ENCODE measurements at regions of chr12 and their contacts with region 1.

Region 1: DNA sequence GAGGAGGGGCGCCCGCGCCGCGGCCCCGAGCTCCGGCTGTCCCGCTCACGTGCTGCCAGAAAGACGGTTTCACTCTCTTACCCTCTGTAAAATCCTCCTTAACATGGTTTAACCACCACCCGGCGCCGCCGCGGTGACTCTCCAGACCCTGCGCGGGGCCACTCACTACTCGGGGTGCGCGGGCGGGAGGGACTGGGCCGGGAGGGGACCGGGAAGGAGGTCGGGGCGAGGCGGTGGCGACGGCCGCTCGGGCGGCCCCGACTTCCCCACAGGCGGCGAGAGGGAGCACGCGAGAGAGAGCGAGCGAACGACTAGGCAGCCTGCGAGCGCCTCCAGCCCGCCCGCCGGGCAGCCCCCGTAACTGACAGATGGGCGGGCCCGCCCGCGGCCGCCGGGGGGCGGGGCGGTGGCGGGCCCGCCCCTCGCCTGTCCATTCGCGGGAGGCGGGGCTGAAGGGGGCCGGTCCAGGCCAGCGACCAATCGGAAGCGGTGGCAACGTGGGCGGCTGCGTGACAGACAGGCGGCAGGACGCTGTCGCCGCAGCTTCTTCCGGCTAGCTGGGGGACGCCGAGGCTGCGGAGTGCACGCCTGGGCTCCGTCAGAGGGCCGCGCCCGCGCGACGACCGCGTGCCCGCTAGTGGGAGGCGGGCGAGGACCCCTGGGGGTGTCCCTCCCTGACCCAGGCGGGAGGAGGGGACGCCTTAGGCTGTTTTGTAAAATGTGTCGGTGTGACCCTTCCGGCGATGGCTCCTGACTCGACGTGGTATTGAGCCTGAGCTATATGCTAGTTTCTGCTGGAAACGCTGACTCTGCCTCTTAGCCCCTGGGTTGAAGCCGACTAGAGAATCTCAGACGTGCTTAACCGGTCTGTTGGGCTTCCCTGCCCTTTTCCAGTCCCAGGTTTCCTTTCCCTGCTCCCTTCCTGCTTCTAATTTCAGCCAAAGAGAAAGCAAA is at the start of gene EEA1:
- DNase-seq: peak; percentile 98
- H3K4me3 Mint-ChIP-seq: peak within 1 kb of the TSS; percentile 89
- H3K27ac Mint-ChIP-seq: peak within 1 kb of the TSS; percentile 96
- H3K4me1 Mint-ChIP-seq: peaks cover 27% of the 10 kb centered on the region
- H3K27me3 Mint-ChIP-seq: peaks cover 6% of the 10 kb centered on the region
- total RNA-seq, gene EEA1: 22.2 and 23.4 TPM in 2 replicates

Region 2: DNA sequence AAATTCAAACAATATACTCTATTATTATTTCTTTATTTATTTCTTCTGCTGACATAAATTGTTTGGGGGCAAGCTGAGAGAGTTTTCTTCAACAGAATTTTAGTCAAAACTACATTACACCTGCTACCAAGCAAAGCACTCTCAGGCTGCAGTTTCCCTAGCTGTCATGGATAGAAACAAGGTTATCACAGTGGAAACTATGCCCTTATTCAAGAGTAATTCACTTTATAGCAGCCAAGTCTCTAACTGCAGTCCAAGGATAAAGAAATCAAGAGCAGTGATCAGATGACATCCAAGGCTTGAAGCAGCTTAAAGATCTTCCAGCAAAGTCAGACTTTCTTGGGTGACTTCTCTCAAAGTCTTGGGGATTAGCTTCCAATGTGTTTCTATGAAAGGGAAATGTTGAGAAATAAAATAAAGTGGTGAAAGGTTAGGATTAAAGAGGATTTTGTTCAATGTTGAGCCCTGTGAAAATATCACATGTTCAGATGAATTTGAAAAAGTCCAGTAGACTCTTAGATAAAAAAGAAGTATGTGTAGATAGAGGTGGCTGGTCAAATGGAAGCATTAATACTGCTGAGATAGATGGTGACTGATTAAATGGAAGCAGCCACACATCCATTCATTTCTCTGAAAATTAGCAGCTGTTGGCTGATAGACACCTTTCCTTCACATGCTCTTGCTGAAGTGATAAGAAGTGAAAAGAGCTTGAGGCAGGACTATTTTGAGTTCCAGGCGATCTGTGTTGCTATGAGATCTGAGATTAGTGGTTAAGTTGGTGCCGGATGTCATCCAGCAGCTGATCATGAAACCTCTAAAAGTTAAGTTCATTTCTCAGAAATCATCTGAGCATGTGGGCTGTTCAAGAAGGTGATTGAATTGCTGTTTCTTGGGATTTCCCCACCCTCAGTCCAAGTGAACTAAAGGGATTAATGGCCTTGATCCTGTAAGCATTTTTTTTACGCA is 525.7 kb before region 1 on chr12:
- intact Hi-C with region 1: loop called (anchors 5 kb)
- DNase-seq: peak; percentile 93
- H3K4me3 Mint-ChIP-seq: peak overlapping the region; percentile 69
- H3K27ac Mint-ChIP-seq: peak overlapping the region; percentile 94
- H3K4me1 Mint-ChIP-seq: peaks cover 78% of the 10 kb centered on the region
- H3K27me3 Mint-ChIP-seq: no peaks in the 10 kb centered on the region

Region 3: DNA sequence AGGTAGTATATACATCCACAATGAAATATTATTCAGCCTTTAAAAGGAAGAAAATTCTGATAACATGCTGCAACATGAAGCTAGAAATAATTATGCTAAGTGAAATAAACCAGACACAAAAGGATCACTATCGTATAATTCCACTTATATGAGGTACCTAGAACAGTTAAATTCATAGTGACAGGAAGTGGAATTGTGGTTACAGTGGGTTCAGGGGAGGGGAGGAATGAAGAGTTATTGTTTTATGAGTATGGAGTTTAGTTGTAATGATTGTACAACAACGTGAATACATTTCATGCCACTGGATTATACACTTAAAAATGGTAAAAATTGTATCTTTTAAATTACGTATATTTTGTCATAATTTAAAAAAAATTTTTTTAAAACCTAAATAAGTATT is 21.1 kb before region 1 on chr12:
- intact Hi-C with region 1: loop called (anchors 1 kb)
- DNase-seq: peak; percentile 76
- H3K4me3 Mint-ChIP-seq: peak overlapping the region; percentile 55
- H3K27ac Mint-ChIP-seq: no peak overlapping the region
- H3K4me1 Mint-ChIP-seq: peaks cover 35% of the 10 kb centered on the region
- H3K27me3 Mint-ChIP-seq: no peaks in the 10 kb centered on the region

Region 4: DNA sequence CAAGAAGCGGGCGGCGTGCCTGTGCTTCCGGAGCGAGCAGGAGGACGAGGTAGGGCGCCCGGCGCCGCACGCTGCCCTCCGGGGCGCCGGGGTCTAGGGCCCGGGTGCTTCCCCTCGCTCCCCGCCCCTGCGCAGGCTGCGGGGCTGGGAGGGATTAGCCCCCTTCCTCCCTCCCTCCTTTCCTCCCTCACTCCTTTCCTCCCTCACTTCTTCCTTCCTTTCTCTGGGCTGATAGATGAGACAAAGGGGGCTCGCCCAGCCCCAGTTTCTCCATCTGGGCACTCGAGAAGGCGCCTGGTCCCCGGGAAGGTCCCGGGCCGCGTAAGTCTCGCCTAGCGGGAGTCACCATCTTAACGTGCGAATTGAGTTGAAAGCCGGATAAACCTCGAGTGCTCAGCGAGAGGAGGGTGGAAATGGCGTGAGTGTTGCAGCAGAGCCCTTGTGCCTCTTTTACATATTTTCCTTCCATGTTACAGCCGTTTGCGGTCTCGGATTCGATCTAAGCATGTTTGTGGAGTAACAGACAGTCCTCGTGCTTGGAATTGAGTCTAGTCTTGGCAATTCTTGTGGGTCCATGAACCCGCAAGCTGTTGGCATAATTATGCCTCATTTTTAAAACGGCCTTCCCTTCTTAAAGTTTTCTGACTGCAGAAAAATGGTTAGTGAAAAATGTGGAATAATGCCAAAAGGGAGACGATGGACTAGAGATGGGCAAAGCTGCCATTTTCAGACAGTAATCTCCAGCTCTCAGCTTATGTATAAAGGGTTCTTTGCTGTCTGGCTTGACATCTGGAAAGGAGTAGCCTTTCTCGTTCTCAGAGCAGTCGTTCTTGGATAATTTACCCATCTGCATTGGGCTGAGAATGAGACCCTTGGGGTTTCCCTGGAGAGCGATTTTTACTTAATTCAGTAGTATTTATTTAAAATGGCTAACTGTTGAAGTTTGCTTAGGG is 449.4 kb after region 1 on chr12:
- intact Hi-C with region 1: loop called (anchors 5 kb)
- DNase-seq: peak; percentile 90
- H3K4me3 Mint-ChIP-seq: peak overlapping the region; percentile 100
- H3K27ac Mint-ChIP-seq: peak overlapping the region; percentile 100
- H3K4me1 Mint-ChIP-seq: peaks cover 37% of the 10 kb centered on the region
- H3K27me3 Mint-ChIP-seq: no peaks in the 10 kb centered on the region

Region 5: GRCh38 chr12:93677195-93678064 is 748.2 kb after region 1 on chr12 and contains the start of gene CRADD:
- intact Hi-C with region 1: loop called (anchors 5 kb)
- DNase-seq: peak; percentile 96
- H3K4me3 Mint-ChIP-seq: peak within 1 kb of the TSS; percentile 96
- H3K27ac Mint-ChIP-seq: peak within 1 kb of the TSS; percentile 99
- H3K4me1 Mint-ChIP-seq: peaks cover 37% of the 10 kb centered on the region
- H3K27me3 Mint-ChIP-seq: peaks cover 4% of the 10 kb centered on the region
- total RNA-seq, gene CRADD: 8.1 and 12.6 TPM in 2 replicates